OCI-LY7 (cell line): ENCODE measurements at regions of chr3 and their contacts with region 1.

Region 1: GRCh38 chr3:156615592-156616173 is 58.7 kb upstream of the TIPARP start:
- DNase-seq: no peak
- H3K4me3 ChIP-seq: no peak overlapping the region
- H3K27ac ChIP-seq: no peak overlapping the region
- H3K4me1 ChIP-seq: peaks cover 3% of the 10 kb centered on the region
- CTCF ChIP-seq: no peak

Region 2: GRCh38 chr3:156264771-156265170 is 350.9 kb before region 1 on chr3:
- CTCF ChIA-PET with region 1: no interaction called
- POLR2A ChIA-PET with region 1: no interaction called
- intact Hi-C with region 1: no loop called
- DNase-seq: no peak
- H3K4me3 ChIP-seq: no peak overlapping the region
- H3K27ac ChIP-seq: no peak overlapping the region
- H3K4me1 ChIP-seq: no peaks in the 10 kb centered on the region
- CTCF ChIP-seq: no peak

Region 3: DNA sequence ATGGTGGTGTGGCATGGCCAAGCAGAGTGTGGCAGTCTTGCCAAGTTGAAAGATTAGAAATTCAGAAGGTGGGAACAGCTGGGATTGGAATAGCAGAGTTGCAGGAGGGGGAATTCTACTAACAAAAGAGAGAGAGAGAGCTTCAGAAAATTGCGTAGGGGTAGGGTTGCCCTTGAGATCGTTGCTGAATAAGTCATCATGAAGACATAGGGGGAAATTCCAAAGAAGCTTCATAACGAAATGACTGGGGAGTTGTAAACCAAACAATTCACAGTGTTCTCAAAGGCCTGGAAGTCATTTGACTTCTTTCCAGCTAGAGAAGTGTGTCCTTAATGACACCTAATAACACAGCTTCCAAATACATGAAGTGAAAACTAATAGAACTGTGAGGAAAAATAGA is 32.4 kb after region 1 on chr3:
- CTCF ChIA-PET with region 1: no interaction called
- POLR2A ChIA-PET with region 1: interaction called, 11 read pairs
- intact Hi-C with region 1: no loop called
- DNase-seq: no peak
- H3K4me3 ChIP-seq: no peak overlapping the region
- H3K27ac ChIP-seq: no peak overlapping the region
- H3K4me1 ChIP-seq: peaks cover 9% of the 10 kb centered on the region
- CTCF ChIP-seq: no peak

Region 4: GRCh38 chr3:156795890-156796481 is 180.3 kb after region 1 on chr3:
- CTCF ChIA-PET with region 1: no interaction called
- POLR2A ChIA-PET with region 1: no interaction called
- intact Hi-C with region 1: no loop called
- DNase-seq: peak; percentile 5
- H3K4me3 ChIP-seq: no peak overlapping the region
- H3K27ac ChIP-seq: no peak overlapping the region
- H3K4me1 ChIP-seq: no peaks in the 10 kb centered on the region
- CTCF ChIP-seq: no peak